Psoas muscle (tissue), 8 donors: ENCODE measurements at regions of chr1 and their contacts with region 1.

Region 1: GRCh38 chr1:6624710-6625583 is at the start of gene THAP3:
- DNase-seq: peak; percentile 90 to 94
- ATAC-seq: peak; percentile 92 to 95 (median 92)
- H3K4me3 ChIP-seq: peak within 1 kb of the TSS; percentile 89
- H3K27ac ChIP-seq: peak within 1 kb of the TSS; percentile 84
- H3K4me1 ChIP-seq: peaks cover 12% of the 10 kb centered on the region
- H3K27me3 ChIP-seq: no peaks in the 10 kb centered on the region
- CTCF ChIP-seq: no peak
- total RNA-seq, gene THAP3: 8.9 to 18.8 (median 13.4) TPM

Region 2: DNA sequence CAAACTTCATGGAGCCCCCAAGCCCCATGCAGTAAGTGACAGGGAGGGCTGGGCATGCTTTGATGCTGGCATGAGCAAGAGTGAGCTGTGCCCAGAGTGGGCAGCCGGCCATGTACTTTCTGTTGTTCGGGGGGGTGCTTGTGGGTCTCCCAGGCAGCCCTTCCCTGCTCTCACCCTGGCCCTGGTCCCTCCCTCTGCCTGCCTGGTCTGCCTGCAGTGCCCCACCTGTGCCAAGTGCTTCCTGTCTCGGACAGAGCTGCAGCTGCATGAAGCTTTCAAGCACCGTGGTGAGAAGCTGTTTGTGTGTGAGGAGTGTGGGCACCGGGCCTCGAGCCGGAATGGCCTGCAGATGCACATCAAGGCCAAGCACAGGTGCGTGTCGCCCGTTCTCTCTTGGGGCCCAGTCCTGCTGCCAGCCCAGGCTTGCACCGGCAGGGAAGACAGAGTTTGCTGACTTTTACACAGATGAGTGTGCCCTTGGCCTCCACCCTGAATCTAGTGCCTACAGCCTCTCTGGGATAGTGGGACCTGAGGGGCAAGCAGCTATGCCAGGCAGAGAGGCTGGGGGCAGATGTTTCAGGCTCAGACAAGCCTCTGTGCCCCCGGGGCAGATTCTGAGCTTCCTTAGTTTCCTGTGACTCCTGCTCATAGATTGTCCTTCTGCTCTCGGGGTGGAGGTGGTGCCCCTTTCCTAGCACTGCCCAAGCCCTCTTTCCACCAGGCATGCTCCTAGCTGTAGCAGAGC is 37.5 kb before region 1 on chr1:
- intact Hi-C with region 1: loop called in 1 of 2 experiments (anchors 5 kb)
- DNase-seq: peak; percentile 66 to 93
- ATAC-seq: peak; percentile 62 to 65 (median 64)
- H3K4me3 ChIP-seq: no peak overlapping the region
- H3K27ac ChIP-seq: peak overlapping the region; percentile 98
- H3K4me1 ChIP-seq: peaks cover 58% of the 10 kb centered on the region
- H3K27me3 ChIP-seq: no peaks in the 10 kb centered on the region
- CTCF ChIP-seq: no peak